Cardiac septum (tissue), 1 donor: ENCODE measurements at regions of chr5 and their contacts with region 1.

Region 1: DNA sequence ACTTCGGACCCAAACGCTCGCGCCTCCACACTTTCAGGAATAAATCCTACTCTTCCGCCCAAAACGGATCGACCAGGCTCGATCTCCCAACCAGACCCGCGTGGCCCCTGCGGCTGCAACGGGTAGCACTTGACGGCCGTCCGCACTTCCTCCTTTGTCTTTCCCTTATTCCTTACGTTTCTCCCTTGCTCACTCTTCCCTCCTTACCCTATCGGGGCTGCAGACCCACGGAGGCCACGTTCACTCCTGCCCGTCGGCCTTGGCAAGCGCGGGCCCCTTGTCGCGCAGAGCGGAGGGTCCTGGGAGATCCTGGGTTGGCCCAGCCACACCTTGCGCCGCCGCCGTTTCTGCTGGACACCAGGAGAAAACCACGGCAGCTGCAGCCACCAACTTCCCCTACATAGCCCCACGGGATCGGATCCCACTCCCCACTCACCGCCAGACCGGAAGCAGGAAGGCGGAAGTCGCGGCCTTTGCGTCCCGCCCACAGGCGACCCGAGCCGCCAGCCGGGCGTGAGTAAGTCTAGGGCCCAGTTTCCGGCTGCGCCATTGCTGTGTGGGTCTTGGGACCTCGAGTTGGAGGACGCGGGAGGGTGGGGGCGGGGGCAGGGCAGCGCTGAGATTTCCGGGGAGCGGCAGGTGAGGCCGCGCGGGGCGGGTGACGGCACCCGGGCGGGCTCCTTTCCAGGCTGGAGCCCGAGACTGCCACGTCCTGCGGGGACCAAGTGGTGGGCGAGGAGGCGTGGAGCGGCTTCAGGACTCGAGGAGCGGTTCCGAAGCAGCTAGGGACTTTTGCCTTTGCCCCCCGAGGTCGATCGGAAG is at the start of gene SMIM15:
- DNase-seq: peak; percentile 95
- total RNA-seq, gene SMIM15: 20.0 TPM

Region 2: DNA sequence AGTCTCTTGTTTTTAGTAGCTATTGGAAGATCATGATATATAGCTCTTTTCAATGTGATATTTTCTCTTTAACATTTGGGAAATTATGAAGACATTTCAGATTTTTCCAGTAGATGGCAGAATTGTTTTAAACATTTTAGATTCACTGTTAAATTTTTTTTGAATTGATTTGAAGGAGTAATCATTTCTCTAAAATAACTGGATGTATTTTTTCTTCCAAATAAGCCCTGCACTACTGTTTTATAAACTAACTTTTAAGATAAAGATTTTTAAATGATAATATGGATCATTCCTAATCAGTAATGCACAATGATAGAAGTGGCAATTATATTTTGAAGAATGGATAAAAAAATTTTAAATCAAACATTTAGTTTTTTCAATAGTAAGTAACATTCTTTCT is 203.1 kb before region 1 on chr5:
- intact Hi-C with region 1: loop called (anchors 10 kb)
- DNase-seq: no peak

Region 3: GRCh38 chr5:61198606-61199005 is 36.4 kb after region 1 on chr5:
- intact Hi-C with region 1: no loop called
- DNase-seq: no peak

Region 4: DNA sequence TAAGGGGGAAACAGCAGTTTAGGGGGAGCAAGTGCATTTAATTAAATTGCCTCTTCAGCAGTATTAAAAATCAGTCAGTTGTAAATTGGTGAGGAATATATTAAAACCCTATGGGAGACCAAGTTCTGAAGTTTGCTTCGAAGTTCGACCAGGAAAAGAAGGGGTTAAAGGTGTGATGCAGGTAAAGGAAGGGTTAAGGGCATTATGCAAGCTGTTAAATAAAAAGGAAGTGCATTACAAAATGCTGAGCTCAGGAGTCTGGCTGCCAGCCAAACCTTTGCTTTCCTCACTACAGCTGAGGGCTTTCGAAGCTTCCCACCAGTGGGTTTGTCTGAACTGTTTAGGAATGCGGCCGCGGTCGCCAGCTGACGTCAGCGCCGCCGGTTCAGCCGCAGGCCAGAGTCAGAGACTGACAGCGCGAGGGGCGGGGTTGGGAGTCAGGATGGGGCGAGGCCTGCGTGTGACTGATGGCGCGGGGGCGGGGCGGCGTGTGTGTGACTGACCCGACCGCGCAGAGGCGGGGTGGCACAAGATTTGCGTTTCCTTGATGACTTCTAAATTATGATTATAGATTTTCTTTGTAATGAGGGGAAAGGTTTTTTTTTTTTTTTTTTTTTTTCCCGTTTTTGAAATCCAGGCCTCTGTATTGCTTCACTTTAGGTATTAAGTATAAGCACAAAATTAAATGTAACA is 246.4 kb after region 1 on chr5:
- intact Hi-C with region 1: loop called (anchors 10 kb)
- DNase-seq: peak; percentile 100

Region 5: DNA sequence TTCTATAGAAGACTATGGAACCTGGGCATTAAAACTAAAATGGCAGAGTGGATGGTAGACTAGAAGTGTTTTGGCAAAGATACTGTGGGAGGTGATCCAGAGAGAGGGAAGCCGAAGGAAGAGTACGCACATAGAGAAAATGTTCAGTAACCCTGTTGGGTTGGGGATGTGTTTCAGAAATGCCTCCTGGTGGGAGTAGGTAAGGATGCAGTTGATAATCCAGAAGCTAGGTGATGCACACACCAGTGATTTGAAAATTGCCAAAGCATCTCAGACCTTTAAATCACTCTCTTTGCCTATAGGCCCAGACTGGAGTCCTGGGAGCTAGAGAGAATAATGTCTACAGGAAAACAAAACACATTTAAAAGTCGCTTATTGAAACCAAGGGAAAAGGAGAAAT is 347.1 kb after region 1 on chr5:
- intact Hi-C with region 1: no loop called
- DNase-seq: no peak

Region 6: DNA sequence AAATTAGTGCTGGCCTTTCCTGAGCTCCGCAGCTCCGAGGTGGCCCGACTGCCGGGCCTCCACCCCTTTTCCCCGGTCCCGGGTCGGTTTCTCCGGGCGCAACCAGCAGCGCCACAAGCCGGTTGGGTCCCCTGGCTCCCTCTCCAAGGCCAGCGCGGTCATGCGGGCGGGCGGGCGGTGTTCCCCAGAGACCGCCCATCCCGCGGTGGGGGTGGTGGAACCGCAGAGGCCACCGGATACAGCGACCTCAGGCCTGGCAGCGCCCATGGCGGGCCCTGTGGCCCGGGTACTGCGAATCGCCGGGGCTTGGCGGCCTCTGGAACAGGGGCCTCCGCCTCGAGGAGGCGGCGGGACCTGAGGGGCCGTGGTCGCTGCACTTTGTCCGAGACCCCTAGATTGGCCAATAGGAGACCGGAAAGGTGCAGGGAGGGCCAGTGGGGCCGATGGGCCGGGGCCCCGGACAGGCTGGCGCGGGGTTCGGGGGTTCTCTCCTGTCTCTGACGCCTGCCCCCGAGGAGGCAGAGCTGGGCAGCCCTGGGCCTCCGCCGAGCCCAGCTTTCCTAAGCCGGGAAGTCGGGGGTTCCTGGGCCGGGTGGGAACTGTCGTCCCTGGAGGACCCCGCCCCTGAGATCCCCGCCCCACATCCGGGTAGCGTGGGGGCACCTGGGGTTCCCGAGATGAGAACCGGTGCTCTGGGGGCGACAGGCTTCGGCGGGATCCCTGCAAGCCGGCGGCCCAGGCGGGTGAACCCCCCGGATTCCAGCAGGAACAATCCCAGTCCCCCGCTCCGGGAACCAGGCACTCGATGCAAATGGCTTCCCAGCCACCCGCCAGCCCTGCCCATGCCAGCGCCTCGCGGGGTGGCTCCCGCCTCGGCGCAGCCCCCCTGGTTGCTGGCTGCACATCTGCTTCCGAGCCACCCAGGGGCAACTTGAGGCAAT is 463.7 kb after region 1 on chr5:
- intact Hi-C with region 1: loop called (anchors 2 kb)
- DNase-seq: peak; percentile 89

Region 7: GRCh38 chr5:61666064-61666621 is 503.9 kb after region 1 on chr5:
- intact Hi-C with region 1: loop called (anchors 10 kb)
- DNase-seq: no peak